SK-N-SH (cell line): ENCODE measurements at regions of chr11 and their contacts with region 1.

Region 1: DNA sequence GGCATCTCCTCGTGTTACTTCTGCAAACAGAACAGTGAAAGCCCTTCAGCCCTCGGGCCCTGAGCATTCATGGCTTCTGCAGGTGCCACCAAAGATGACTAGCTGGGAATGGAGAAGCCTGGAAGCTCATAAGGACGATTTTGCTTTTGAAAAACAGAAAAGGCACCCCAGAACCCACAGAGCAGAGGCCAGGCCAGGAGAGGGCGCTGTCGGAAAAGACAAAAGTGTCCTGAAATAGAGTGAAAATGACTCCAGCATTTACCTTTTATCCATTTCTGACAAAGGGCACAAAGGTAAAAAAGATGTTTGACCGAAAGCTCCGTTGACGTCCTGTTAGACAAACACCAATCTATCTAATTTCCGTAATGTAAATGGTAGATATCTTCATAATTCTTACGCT is 37.6 kb downstream of the ZNF195 start:
- DNase-seq: peak; percentile 65
- H3K4me3 ChIP-seq: peak overlapping the region in 1 of 2 experiments; percentile 36; a peak in 1 of 4 replicates
- H3K27ac ChIP-seq: no peak overlapping the region
- H3K4me1 ChIP-seq: no peaks in the 10 kb centered on the region
- H3K27me3 ChIP-seq: no peaks in the 10 kb centered on the region
- CTCF ChIP-seq: peak; percentile 72
- EP300 ChIP-seq: no peak
- RAD21 ChIP-seq: peak; percentile 90

Region 2: DNA sequence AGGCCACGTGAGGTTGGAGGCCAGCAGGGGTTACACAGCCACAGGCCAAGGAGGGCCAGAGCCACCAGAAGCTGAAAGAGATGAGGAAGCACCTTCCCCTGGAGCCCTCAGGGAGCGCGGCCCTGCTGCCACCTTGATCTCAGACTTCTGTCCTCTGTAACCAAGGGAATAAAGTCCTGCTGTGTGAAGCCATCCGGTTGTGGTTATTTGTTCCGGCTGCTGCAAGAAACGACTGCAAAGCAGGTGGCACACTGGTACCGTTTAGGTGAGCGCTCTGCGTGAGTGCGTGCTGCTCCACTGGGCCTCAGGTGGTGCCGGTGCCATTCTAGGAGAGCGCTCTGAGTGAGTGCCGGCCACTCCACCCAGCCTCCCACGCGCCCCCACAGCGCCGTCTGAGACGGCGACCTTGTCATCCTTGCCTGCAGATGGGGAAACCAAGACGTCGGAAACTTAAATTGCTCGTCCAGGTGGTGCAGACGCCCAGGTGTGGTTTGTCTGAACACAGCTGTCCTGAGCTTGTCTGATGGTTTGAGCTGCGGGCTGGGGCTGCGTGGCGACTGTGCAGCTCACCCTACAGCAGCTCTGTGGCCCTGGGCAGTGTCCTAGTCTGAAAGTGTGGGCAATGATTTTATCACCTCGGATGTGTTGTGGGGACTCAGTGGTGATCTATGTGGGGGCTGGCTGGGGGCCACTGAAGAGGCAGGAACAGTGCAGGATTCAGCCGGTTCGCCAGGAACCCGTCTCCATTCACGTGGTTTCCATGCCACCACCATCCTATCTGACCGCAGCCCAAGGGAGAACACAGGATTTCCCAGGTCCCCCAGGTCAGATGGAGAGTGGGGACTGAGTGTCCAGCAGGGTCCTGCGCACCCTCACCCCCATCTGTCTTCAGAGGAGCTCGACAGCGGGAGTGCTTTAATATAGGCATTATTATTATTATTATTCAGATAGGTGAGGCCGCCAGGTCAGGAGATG is 118.1 kb before region 1 on chr11:
- CTCF ChIA-PET with region 1: interaction called, 13 read pairs
- POLR2A ChIA-PET with region 1: no interaction called
- DNase-seq: peak; percentile 23
- H3K4me3 ChIP-seq: no peak overlapping the region
- H3K27ac ChIP-seq: no peak overlapping the region
- H3K4me1 ChIP-seq: no peaks in the 10 kb centered on the region; a peak in 1 of 4 replicates
- H3K27me3 ChIP-seq: no peaks in the 10 kb centered on the region
- CTCF ChIP-seq: no peak
- EP300 ChIP-seq: no peak
- RAD21 ChIP-seq: no peak

Region 3: GRCh38 chr11:3353066-3353465 is 11.8 kb after region 1 on chr11:
- CTCF ChIA-PET with region 1: interaction called, 67 read pairs
- POLR2A ChIA-PET with region 1: no interaction called
- DNase-seq: no peak
- H3K4me3 ChIP-seq: no peak overlapping the region
- H3K27ac ChIP-seq: no peak overlapping the region
- H3K4me1 ChIP-seq: no peaks in the 10 kb centered on the region
- H3K27me3 ChIP-seq: no peaks in the 10 kb centered on the region
- CTCF ChIP-seq: no peak
- EP300 ChIP-seq: no peak
- RAD21 ChIP-seq: no peak

Region 4: GRCh38 chr11:3368199-3368598 is 26.9 kb after region 1 on chr11:
- CTCF ChIA-PET with region 1: interaction called, 88 read pairs
- POLR2A ChIA-PET with region 1: no interaction called
- DNase-seq: no peak
- H3K4me3 ChIP-seq: no peak overlapping the region
- H3K27ac ChIP-seq: no peak overlapping the region
- H3K4me1 ChIP-seq: no peaks in the 10 kb centered on the region
- H3K27me3 ChIP-seq: no peaks in the 10 kb centered on the region
- CTCF ChIP-seq: no peak
- EP300 ChIP-seq: no peak
- RAD21 ChIP-seq: no peak

Region 5: DNA sequence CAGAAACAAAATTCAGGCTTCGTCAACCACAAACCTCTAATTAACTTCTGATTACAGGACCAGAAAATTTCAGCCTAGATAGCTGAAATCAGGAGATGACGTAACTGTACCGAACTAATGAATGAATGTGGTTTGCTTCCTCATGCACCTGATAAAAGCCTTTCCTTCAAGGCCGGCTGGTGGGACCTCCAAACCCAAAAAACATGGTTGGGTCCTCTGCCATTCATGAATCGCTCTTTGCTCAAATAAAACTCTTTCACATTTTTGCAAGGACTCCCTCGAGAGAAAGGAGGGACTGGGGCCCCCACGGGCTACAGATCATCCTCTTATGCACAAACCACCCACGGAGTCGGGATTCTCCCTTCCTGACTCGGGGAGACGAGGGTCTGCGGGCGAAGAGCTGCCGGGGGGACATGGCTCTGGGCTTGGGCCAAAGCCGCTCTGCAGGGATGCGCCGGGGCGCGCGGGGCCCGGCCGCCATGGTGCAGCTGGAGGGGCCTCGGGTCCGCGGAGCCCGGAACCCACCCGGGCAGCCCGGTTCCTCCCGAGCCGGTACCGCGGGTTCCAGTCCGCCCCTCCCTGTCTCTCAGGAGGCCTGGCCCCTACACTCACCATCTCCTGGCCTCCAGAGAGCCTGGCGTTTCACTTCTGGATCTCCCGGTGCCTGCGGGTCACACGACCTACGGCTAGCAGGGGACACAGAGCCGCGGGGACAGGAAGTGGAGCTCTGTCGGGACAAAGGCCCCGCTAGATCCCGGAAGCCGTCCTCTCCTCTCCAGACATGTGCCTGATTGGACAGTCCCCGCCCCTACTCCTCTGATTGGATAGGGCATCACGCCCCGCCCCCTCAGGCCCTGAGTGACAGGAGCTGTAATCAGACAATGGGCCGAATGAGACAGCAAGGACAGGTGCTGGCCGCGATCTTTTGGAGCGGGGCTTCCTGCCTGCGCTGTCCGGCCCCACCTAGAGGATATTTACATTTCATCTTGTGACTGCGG is 37.4 kb after region 1 on chr11 and contains the start of gene ZNF195:
- CTCF ChIA-PET with region 1: interaction called, 88 read pairs
- POLR2A ChIA-PET with region 1: interaction called, 6 read pairs
- DNase-seq: peak; percentile 98
- H3K4me3 ChIP-seq: peak within 1 kb of the TSS; percentile 96 to 98
- H3K27ac ChIP-seq: peak within 1 kb of the TSS; percentile 68 to 94
- H3K4me1 ChIP-seq: peaks cover 16 to 45% of the 10 kb centered on the region in 2 experiments; a peak in 3 of 4 replicates
- H3K27me3 ChIP-seq: no peaks in the 10 kb centered on the region
- CTCF ChIP-seq: no peak
- EP300 ChIP-seq: 0 out of 4 replicates have a peak, but pooled peaks of 1 of the 2 experiments have one; percentile 24
- RAD21 ChIP-seq: peak; percentile 15; the same call in 1 of the 2 replicates
- polyA plus RNA-seq, gene ZNF195: 13.2 and 21.7 TPM in 2 replicates

Region 6: GRCh38 chr11:3412837-3413236 is 71.5 kb after region 1 on chr11:
- CTCF ChIA-PET with region 1: interaction called, 156 read pairs
- POLR2A ChIA-PET with region 1: interaction called, 4 read pairs
- DNase-seq: no peak
- H3K4me3 ChIP-seq: no peak overlapping the region
- H3K27ac ChIP-seq: no peak overlapping the region
- H3K4me1 ChIP-seq: no peaks in the 10 kb centered on the region; a peak in 1 of 4 replicates
- H3K27me3 ChIP-seq: no peaks in the 10 kb centered on the region
- CTCF ChIP-seq: no peak
- EP300 ChIP-seq: no peak
- RAD21 ChIP-seq: no peak